ENCODE measurements at regions of chr19 and their contacts with region 1.

Region 1: DNA sequence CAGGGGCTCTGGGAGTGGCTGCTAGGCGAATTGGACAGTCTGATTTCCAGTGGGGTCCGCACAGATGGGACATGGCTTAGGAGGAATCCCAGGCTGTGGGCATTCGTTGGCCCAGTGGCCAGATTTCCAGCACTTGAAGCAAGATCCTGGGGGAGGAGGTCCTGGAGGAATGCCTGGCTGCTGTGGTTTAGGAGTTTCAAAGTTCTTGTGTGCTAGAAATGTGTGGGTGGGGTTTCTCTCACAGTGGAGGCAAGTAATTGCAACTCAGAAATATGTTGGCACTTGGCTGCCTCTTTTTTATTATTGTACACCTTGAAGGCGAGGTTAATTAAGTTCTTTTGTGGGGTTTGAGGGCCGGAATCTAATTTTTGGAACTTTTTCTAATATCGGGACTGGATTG is 17.1 kb downstream of the IGFL3 start:
- DNase-seq: peak in 1 of 2 donors; percentile 86
- H3K4me3 ChIP-seq: no peak overlapping the region
- H3K27ac ChIP-seq: peak overlapping the region; percentile 58 to 66
- H3K4me1 ChIP-seq: no peaks in the 10 kb centered on the region
- H3K27me3 ChIP-seq: no peaks in the 10 kb centered on the region
- CTCF ChIP-seq: no peak
- POLR2A ChIP-seq: no peak

Region 2: DNA sequence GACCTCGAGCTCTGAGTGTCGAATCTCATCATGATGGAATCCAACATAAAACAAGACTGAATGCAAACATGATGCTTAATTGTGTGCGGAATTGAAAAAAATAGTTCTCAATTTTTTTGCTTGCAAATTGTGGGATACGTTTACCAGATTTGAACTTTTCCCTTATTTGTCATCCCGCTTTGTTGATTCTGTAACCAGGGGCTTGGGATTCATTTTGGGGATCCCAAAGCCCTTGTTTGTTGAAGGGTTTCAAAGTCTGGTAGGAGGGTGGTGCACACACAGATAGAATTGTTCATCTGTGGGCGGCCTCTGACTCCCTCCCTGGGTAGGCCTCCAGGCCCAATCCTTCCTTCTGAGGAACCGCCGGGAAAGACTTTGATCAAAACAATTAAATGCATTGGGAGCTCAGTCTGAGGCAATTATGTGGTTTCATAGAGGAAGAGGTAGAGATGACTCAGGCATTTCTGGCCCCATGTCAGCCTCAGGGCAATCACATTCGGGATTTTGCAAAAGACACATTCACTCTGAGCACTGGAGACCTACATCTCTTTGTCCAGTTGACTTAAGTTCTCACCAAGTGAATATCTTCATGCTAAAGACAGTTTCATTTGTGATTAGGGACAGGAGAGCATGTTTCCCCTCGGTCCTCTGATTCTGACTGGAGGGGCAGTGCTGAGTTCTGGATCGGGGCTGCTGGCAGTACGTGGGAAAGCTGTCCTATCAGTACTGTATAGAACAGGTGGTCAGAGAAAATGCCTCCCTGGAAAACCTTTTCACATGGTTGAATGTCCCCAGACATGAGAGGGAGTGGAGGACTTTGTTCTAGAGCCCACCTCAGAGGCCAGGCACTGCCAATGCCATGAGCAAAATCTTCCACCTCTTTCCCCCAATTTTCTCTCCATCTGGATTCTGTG is 38.8 kb before region 1 on chr19:
- intact Hi-C with region 1: no loop called
- DNase-seq: peak in 1 of 2 donors; percentile 64
- H3K4me3 ChIP-seq: no peak overlapping the region
- H3K27ac ChIP-seq: peak overlapping the region in 1 of 2 donors; percentile 3
- H3K4me1 ChIP-seq: peaks cover 0 to 10% of the 10 kb centered on the region in 2 donors
- H3K27me3 ChIP-seq: no peaks in the 10 kb centered on the region
- CTCF ChIP-seq: no peak
- POLR2A ChIP-seq: no peak

Region 3: GRCh38 chr19:46133101-46133682 is 25.8 kb after region 1 on chr19:
- intact Hi-C with region 1: loop called (anchors 2 kb)
- DNase-seq: peak in 1 of 2 donors; percentile 81
- H3K4me3 ChIP-seq: peak overlapping the region in 1 of 3 donors; percentile 16
- H3K27ac ChIP-seq: peak overlapping the region; percentile 89 to 92
- H3K4me1 ChIP-seq: no peaks in the 10 kb centered on the region
- H3K27me3 ChIP-seq: no peaks in the 10 kb centered on the region
- CTCF ChIP-seq: no peak
- POLR2A ChIP-seq: peak; percentile 24

Measured in breast epithelium (tissue), 4 donors.